Spleen (tissue), 13 donors: ENCODE measurements at regions of chr6 and their contacts with region 1.

Region 1: GRCh38 chr6:114304304-114304887 is 38.4 kb downstream of the HS3ST5 start:
- DNase-seq: no peak
- H3K4me3 ChIP-seq: no peak overlapping the region
- H3K27ac ChIP-seq: no peak overlapping the region
- H3K4me1 ChIP-seq: no peaks in the 10 kb centered on the region
- H3K27me3 ChIP-seq: no peaks in the 10 kb centered on the region
- CTCF ChIP-seq: peak in 5 of 11 experiments; percentile 21 to 51 (median 40)
- POLR2A ChIP-seq: no peak

Region 2: GRCh38 chr6:114096561-114097172 is 207.7 kb before region 1 on chr6:
- intact Hi-C with region 1: loop called (anchors 5 kb)
- DNase-seq: no peak
- H3K4me3 ChIP-seq: no peak overlapping the region
- H3K27ac ChIP-seq: no peak overlapping the region
- H3K4me1 ChIP-seq: no peaks in the 10 kb centered on the region
- H3K27me3 ChIP-seq: peaks cover 0 to 11% (median 0%) of the 10 kb centered on the region in 7 donors
- CTCF ChIP-seq: peak in 9 of 11 experiments; percentile 42 to 73 (median 58)
- POLR2A ChIP-seq: no peak